Activated T-helper 2 cell treated with anti-CD3 and anti-CD28 coated beads, Interferon-gamma antibody, Interleukin-2, Interleukin-4, amounts not matched to agents 10 μg/mL and 5 μg/mL and 100 μg/mL, durations not matched to agents 14 hours and 24 hours and 36 hours (primary cell): ENCODE measurements at regions of chr9 and their contacts with region 1.

Region 1: GRCh38 chr9:4939118-4939561 is 45.9 kb upstream of the JAK2 start:
- DNase-seq: peak; percentile 39
- H3K4me3 Mint-ChIP-seq: peak overlapping the region; percentile 14
- H3K27ac Mint-ChIP-seq: peak overlapping the region; percentile 90
- H3K4me1 Mint-ChIP-seq: peaks cover 65% of the 10 kb centered on the region
- H3K27me3 Mint-ChIP-seq: no peaks in the 10 kb centered on the region

Region 2: GRCh38 chr9:4923580-4924544 is 15.3 kb before region 1 on chr9:
- intact Hi-C with region 1: loop called (anchors 2 kb)
- DNase-seq: no peak
- H3K4me3 Mint-ChIP-seq: no peak overlapping the region
- H3K27ac Mint-ChIP-seq: peak overlapping the region; percentile 83
- H3K4me1 Mint-ChIP-seq: peaks cover 48% of the 10 kb centered on the region
- H3K27me3 Mint-ChIP-seq: no peaks in the 10 kb centered on the region

Region 3: GRCh38 chr9:4970970-4971641 is 32.0 kb after region 1 on chr9:
- intact Hi-C with region 1: loop called (anchors 1 kb)
- DNase-seq: peak; percentile 57
- H3K4me3 Mint-ChIP-seq: no peak overlapping the region
- H3K27ac Mint-ChIP-seq: no peak overlapping the region
- H3K4me1 Mint-ChIP-seq: peaks cover 29% of the 10 kb centered on the region
- H3K27me3 Mint-ChIP-seq: no peaks in the 10 kb centered on the region

Region 4: GRCh38 chr9:5146241-5146908 is 207.2 kb after region 1 on chr9:
- intact Hi-C with region 1: no loop called
- DNase-seq: no peak
- H3K4me3 Mint-ChIP-seq: no peak overlapping the region
- H3K27ac Mint-ChIP-seq: no peak overlapping the region
- H3K4me1 Mint-ChIP-seq: peaks cover 3% of the 10 kb centered on the region
- H3K27me3 Mint-ChIP-seq: no peaks in the 10 kb centered on the region